Body of pancreas (tissue), 4 donors: ENCODE measurements at regions of chr13 and their contacts with region 1.

Region 1: DNA sequence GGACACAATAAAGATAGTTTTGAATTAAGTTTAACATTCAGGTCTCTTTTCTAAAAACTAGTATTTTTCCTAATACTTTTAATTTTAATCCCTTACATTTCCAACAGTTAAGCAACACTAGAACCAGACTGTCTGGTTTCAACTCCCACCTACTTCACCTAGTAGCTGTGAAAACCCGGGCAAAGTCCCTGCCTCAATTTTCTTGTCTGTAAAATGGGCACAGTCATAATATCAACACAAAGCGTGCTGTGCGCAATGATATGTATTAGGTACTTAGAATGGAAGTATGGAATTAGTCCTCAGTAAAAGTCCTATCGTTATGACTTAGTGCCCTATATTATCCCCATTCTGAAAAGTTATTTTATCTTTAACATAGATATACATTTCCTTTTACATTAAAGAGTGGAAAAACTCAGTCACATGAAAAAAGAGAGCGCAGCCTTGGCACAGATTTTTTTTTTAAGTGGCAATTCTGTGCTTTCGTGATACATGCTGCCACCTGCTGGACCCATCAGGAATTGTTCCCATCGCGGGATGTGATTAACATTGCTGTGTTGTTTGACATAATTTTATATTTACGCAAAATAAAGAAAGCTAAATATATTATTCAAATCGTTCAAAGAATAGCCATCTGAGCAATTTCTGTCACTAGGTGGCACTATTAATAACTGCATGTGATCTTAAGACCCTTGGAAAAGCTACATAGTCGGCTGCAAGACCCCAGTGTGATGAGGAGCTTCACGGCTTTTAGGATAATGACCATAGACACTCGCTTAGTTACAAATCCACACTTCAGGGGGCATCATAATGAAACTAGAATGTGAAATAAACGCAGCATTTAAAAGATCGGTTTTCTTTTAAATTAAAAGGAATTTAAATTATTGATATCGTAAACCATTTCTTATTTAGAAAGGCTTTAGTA is 59.9 kb downstream of the LIG4 start:
- DNase-seq: peak; percentile 61 to 81 (median 70)
- ATAC-seq: peak; percentile 55
- H3K4me3 ChIP-seq: no peak overlapping the region
- H3K27ac ChIP-seq: peak overlapping the region in 2 of 4 donors; percentile 54 to 76
- H3K4me1 ChIP-seq: peaks cover 17% of the 10 kb centered on the region
- H3K27me3 ChIP-seq: no peaks in the 10 kb centered on the region
- CTCF ChIP-seq: peak; percentile 71 to 87 (median 82)
- POLR2A ChIP-seq: no peak

Region 2: DNA sequence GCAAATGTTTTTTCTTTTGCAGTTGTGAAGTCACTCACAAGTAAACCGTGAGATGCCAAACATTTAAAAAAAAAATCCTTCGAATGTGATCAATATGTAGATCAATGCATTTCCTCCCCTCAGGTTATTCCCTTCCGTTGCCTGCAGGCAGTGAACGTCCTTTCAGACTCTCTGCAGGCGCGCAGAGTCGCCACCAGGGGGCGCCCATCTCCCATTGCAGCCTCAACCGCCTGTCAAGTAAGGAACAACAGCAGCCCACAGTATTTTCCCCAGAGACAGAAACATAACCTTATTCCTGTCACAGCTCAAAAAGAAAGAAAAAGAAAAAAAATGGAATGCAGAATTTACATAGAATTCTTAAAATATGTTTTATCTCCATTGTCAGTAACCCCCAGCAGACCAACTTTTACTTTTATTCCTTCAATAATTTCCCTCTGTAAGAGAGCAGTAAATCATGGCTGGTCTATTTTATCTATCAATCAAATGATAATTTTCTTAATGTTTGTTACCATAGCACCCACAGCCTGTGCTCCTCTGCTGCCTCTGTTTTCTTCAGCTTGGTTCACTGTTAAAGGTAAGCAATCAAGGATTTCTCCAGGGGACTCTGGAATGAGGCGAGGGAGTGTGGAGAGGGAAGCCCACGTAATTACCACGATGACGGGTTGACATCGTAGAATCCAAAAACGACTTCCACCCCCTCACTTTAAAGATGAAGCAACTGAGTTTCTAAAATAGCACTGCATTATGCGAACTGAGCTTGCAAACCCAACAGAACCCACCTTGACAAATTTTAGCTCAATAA is 949.9 kb before region 1 on chr13:
- intact Hi-C with region 1: loop called (anchors 5 kb)
- DNase-seq: peak; percentile 61 to 73 (median 66)
- ATAC-seq: peak; percentile 81
- H3K4me3 ChIP-seq: no peak overlapping the region
- H3K27ac ChIP-seq: no peak overlapping the region
- H3K4me1 ChIP-seq: no peaks in the 10 kb centered on the region
- H3K27me3 ChIP-seq: no peaks in the 10 kb centered on the region
- CTCF ChIP-seq: peak; percentile 77 to 98 (median 88)
- POLR2A ChIP-seq: no peak

Region 3: DNA sequence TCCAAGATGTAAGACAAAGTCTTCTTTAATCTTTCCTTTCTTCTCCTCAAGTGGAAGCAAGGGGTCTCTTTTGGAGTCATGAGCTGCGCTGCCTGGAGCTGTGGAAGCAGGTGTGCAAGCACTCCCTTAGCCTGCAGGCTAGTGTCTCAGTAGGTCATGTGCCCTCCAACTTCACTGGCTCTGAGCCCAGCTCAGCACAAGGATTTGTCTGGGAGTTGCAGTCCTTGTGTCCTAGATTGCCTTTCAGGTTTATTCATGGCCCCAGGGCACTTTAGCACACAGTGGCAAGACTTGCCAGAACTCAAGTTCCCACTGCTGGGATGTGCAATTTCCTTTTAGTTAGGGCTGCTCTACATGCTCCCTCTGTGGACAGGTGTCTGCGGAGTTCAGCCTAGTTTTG is 151.8 kb before region 1 on chr13:
- intact Hi-C with region 1: no loop called
- DNase-seq: no peak
- ATAC-seq: no peak
- H3K4me3 ChIP-seq: no peak overlapping the region
- H3K27ac ChIP-seq: no peak overlapping the region
- H3K4me1 ChIP-seq: no peaks in the 10 kb centered on the region
- H3K27me3 ChIP-seq: no peaks in the 10 kb centered on the region
- CTCF ChIP-seq: no peak
- POLR2A ChIP-seq: no peak

Region 4: DNA sequence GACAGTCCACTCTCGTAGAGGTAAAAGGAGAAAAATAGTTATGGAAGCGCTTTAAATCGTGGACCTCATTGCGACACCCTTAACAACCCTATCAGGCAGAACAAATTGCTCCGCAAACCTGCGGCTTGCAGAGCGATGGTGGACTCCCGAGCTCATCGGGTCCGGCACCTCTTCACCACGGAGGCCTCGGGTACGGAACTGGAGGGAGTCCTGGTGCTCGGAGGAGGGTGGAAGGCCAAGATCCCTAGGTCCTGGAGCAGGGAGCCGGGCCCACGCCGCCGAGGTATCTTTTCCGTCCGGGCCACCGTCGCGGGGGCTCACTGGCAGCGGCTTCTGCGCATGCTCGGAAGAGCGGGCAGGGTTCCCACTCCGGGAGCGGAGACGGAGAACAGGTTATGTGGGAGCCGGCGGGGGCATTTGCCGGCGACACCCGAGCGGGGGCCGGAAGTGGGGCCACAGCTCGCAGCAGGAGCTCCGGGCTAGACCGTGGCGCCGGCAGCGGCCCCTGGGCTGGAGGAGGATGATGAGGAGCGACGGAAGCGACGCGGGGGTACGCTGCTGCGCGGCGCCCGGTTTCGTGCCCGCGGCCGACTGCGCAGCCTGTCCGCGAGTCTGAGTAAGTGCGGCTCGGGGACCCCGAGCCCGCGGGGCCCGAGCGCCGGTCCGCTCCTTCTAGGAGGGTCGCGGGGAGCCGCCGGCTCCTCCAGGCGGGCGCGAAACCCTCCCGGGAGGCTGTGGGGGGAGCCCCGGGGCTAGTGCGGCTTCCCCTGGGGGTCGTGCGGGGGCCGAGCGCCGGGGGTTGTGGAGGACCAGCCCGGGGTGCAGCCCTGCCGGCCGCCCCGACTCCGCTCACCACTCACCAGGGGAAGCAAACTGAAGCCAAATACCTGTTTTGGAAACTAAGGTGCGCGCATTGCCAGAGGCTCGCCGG is 62.9 kb after region 1 on chr13 and contains the start of gene ABHD13:
- intact Hi-C with region 1: no loop called
- DNase-seq: peak; percentile 91
- ATAC-seq: peak; percentile 93
- H3K4me3 ChIP-seq: peak within 1 kb of the TSS; percentile 69 to 99
- H3K27ac ChIP-seq: peak within 1 kb of the TSS; percentile 68 to 89 (median 82)
- H3K4me1 ChIP-seq: peaks cover 49% of the 10 kb centered on the region
- H3K27me3 ChIP-seq: no peaks in the 10 kb centered on the region
- CTCF ChIP-seq: peak in 2 of 7 experiments; percentile 6 to 14
- POLR2A ChIP-seq: peak; percentile 54 to 80 (median 78)
- total RNA-seq, gene ABHD13: 5.6 to 10.9 TPM

Region 5: GRCh38 chr13:109274188-109274821 is 1118.9 kb after region 1 on chr13:
- intact Hi-C with region 1: no loop called
- DNase-seq: peak in 1 of 4 donors; percentile 3
- ATAC-seq: no peak
- H3K4me3 ChIP-seq: no peak overlapping the region
- H3K27ac ChIP-seq: no peak overlapping the region
- H3K4me1 ChIP-seq: no peaks in the 10 kb centered on the region
- H3K27me3 ChIP-seq: no peaks in the 10 kb centered on the region
- CTCF ChIP-seq: no peak
- POLR2A ChIP-seq: no peak